ENCODE measurements at regions of chr2 and their contacts with region 1.

Region 1: DNA sequence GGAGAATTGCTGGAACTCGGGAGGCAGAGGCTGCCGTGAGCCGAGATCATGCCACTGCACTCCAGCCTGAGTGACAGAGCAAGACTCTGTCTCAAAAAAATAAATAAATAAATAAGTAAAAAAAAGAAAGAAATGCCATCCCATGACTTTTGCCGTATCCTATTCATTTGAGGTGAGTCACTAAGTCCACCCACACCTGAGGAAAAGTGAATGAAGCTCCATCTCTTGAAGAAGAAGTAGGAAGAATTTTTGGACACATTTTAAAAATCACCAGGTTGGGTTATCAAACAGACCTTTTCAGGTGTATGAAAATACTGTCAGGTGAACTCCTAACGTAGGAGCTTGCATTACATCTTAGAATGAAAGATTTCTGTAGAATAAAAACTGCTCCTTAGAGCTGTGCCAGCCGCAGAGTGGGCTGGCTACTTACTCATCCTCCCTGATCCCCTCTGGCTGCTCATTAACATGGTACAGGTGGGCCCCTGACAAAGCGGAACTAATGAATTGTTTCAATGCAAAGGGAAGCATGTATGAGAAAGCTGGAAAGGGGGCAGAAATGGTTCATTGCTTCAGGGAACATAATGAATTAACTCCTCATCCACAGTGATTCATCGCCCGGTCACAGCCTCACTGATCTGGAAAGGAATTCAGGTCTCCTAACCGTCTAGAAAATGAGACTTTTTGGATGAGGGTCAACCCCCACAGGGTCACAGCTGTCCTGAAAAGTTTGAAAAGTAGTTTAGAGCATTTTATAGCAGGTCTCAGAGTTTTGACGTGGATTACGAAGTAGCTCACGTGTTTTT is 191.4 kb downstream of the SPP2 start:
- DNase-seq: peak; percentile 84
- H3K4me3 Mint-ChIP-seq: peak overlapping the region; percentile 51
- H3K27ac Mint-ChIP-seq: peak overlapping the region; percentile 80
- H3K4me1 Mint-ChIP-seq: peaks cover 50% of the 10 kb centered on the region
- H3K27me3 Mint-ChIP-seq: no peaks in the 10 kb centered on the region
- CTCF ChIP-seq: no peak

Region 2: DNA sequence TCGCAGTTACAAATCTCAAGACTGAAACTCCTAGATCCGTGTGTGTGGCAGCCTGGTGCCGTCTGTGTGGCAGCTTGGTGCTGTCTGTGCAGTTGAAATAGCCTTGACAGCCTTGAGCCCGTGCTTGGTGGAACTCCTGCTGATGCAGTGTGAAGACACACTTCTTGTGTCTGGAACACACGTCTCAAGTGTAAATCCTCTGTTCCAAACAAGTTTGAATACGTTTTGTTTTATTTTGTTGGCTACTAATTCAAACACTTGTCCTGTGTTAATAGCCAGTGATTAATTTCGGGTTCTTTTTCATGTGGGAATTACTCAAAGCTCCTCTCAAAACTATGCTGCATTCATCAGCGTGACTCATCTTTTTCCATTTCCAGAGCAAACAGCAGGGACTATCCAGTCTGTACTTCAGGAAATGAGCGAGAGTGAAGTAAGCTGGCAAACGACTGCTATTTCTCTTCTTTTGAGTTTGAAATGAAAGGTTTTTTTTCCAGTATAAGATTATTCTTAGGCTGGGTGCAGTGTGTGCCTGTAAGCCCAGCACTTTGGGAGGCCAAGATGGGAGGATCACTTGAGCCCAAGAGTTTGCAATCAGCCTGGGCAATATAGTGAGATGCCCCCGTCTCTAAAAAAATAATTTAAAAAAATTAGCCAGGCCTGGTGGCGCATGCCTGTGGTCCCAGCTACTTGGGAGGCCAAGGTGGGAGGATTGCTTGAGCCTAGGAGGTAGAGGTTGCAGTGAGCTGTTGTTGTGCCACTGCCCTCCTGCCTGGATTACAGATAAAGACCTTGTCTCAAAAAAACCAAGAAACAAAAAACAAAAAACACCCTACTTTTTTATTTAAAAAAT is 38.5 kb before region 1 on chr2:
- CTCF ChIA-PET with region 1: no interaction called
- POLR2A ChIA-PET with region 1: interaction called, 11 read pairs
- intact Hi-C with region 1: no loop called
- DNase-seq: peak; percentile 96
- H3K4me3 Mint-ChIP-seq: peak overlapping the region; percentile 61
- H3K27ac Mint-ChIP-seq: peak overlapping the region; percentile 78
- H3K4me1 Mint-ChIP-seq: peaks cover 7% of the 10 kb centered on the region
- H3K27me3 Mint-ChIP-seq: peaks cover 6% of the 10 kb centered on the region
- CTCF ChIP-seq: no peak

Region 3: GRCh38 chr2:234308813-234309195 is 66.9 kb after region 1 on chr2:
- CTCF ChIA-PET with region 1: interaction called, 3 read pairs
- POLR2A ChIA-PET with region 1: interaction called, 10 read pairs
- intact Hi-C with region 1: no loop called
- DNase-seq: no peak
- H3K4me3 Mint-ChIP-seq: no peak overlapping the region
- H3K27ac Mint-ChIP-seq: no peak overlapping the region
- H3K4me1 Mint-ChIP-seq: peaks cover 24% of the 10 kb centered on the region
- H3K27me3 Mint-ChIP-seq: no peaks in the 10 kb centered on the region
- CTCF ChIP-seq: no peak